Heart right ventricle (tissue), 16 donors: ENCODE measurements at regions of chr14 and their contacts with region 1.

Region 1: GRCh38 chr14:22829661-22830442 is at the start of gene MRPL52:
- DNase-seq: peak; percentile 90 to 91
- ATAC-seq: peak; percentile 96 to 98 (median 98)
- H3K4me3 ChIP-seq: peak within 1 kb of the TSS; percentile 63 to 94 (median 82)
- H3K27ac ChIP-seq: peak within 1 kb of the TSS in 9 of 10 donors; percentile 78 to 92 (median 84)
- H3K4me1 ChIP-seq: peaks cover 0 to 17% (median 11%) of the 10 kb centered on the region in 9 donors
- H3K27me3 ChIP-seq: no peaks in the 10 kb centered on the region
- CTCF ChIP-seq: no peak
- total RNA-seq, gene MRPL52: 90.1 to 117 (median 106) TPM

Region 2: GRCh38 chr14:22900081-22900799 is 70.4 kb after region 1 on chr14:
- intact Hi-C with region 1: loop called in 1 of 10 experiments (anchors 10 kb)
- DNase-seq: peak in 1 of 2 donors; percentile 44
- ATAC-seq: peak; percentile 32 to 77 (median 46)
- H3K4me3 ChIP-seq: no peak overlapping the region
- H3K27ac ChIP-seq: peak overlapping the region in 1 of 10 donors; percentile 26
- H3K4me1 ChIP-seq: peaks cover 0 to 22% (median 0%) of the 10 kb centered on the region in 9 donors
- H3K27me3 ChIP-seq: no peaks in the 10 kb centered on the region
- CTCF ChIP-seq: peak; percentile 5 to 67 (median 55)

Region 3: GRCh38 chr14:22918804-22919600 is 89.2 kb after region 1 on chr14 and contains the start of gene RBM23:
- intact Hi-C with region 1: loop called in 1 of 10 experiments (anchors 5 kb)
- DNase-seq: peak; percentile 99 to 100
- ATAC-seq: peak; percentile 91 to 97 (median 95)
- H3K4me3 ChIP-seq: peak within 1 kb of the TSS; percentile 58 to 97 (median 80)
- H3K27ac ChIP-seq: peak within 1 kb of the TSS; percentile 91 to 99 (median 97)
- H3K4me1 ChIP-seq: peaks cover 7 to 52% (median 35%) of the 10 kb centered on the region in 9 donors
- H3K27me3 ChIP-seq: no peaks in the 10 kb centered on the region
- CTCF ChIP-seq: peak in 1 of 9 donors; percentile 9
- total RNA-seq, gene RBM23: 27.8 to 58.1 (median 36.1) TPM